Activated CD8-positive, alpha-beta T cell treated with anti-CD3 and anti-CD28 coated beads, Interleukin-2, amount 10 ng/mL, durations not matched to agents 7 days and 5 days (primary cell): ENCODE measurements at regions of chr17 and their contacts with region 1.

Region 1: DNA sequence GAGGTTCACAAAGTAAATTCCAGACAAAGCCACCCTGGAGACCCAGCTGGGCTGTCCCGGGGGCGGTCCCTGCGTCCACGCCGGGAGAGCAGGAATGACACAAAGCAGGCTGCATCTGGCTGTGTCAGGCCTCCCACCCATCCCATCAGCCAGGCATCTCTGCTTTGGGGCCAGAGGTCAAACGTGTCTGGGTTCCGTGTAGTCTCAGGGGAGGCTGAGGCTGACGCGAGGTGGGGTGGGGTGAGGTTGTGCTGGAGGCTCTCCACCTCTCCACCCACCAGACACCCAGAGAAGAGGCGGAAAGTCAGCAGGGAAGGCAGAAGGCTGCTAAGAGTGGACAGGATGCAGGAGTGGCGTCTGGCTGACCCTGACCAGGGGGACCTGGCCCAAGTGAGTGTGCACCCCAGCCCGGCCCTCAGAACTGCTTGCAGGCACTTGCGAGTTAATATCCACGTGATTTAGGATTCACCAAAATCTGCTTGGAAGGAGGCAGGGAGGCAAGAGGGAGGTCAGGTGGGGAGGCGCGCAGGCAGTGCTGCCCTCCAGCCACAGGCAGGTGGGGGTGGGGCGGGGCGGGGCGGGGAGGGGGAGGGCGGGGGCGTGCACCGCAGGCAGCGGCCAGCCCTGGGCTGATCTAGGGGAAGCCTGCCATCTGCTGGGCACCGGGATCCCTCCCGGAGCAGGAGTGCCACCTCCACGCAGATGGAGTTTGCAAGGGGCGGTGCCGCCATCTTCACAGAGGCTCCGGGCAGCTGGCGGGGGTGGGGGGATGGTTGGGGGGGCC is 44.3 kb downstream of the TBC1D16 start:
- DNase-seq: peak; percentile 89
- ATAC-seq: peak; percentile 91
- H3K4me3 Mint-ChIP-seq: peak overlapping the region; percentile 70
- H3K27ac Mint-ChIP-seq: peak overlapping the region; percentile 43
- H3K4me1 Mint-ChIP-seq: peaks cover 44% of the 10 kb centered on the region
- H3K27me3 Mint-ChIP-seq: no peaks in the 10 kb centered on the region

Region 2: DNA sequence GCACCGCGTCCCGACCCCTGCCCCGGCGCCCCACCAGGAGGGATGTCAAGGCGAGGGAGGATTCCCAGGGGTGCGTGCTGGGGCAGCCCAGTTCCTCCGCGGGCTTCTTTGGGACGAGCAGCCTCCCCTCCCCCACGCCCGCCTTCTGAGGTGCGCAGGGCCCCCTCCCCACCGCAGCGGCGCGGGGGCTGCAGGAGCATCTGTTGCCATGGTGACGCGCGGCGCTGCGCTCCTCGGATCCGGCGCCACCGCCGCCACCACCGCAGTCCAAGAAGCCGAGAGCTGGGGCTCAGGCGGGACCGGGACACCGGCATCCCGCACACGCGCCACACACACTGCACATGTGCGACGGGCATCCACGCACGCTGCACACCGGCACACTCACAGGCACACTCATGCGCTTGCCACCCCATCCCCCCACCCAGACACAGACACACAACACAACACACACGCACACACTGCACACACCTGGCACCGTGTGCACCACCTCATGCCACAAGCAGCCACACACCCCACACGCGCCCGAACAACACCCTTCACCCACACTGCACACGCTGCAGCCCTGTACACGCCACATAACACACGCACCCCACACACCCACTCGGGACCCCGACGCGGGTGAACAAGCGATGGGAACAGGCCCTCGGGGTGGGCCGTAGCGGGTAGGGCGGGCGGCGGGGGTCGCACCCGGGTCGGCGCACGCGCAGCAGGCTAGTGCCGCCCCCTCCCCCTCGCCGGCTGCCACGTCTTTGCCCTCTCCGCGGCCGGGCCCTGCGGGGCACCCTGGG is 243.6 kb before region 1 on chr17:
- CTCF ChIA-PET with region 1: interaction called, 11 read pairs
- POLR2A ChIA-PET with region 1: no interaction called
- DNase-seq: no peak
- ATAC-seq: no peak
- H3K4me3 Mint-ChIP-seq: peak overlapping the region; percentile 38
- H3K27ac Mint-ChIP-seq: no peak overlapping the region
- H3K4me1 Mint-ChIP-seq: peaks cover 21% of the 10 kb centered on the region
- H3K27me3 Mint-ChIP-seq: peaks cover 38% of the 10 kb centered on the region

Region 3: DNA sequence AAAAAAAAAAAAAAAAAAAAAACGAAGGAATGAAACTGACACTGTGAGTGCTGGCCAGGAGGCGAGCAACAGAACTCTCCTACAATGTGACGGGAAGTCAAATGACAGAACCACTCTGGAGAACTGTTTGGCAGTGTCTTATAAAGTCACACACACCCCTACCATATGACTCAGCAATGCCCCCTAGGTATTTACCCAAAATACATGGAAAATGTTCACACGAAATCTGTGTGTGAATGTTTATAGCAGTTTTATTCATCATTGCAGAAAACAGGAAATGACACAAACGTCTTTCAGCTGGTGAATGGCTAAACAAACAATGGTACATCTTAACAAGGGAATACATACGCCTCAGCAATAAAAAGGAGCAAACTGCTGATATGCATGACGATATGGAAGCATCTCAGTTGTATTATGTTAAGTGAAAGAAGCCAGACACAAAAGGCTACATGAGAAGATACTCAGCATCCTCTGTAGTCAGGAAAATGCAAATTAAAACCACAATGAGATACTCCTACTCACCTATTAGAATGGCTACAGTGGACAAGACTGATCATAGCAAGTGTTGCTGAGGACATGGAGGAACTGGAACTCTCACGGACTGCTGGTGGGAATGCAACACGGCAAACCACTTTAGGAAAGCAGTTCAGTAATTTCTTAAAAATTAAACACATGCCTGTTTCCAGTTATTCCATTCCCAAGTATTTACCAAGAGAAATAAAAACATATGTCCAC is 30.4 kb before region 1 on chr17:
- CTCF ChIA-PET with region 1: no interaction called
- POLR2A ChIA-PET with region 1: no interaction called
- DNase-seq: no peak
- ATAC-seq: no peak
- H3K4me3 Mint-ChIP-seq: no peak overlapping the region
- H3K27ac Mint-ChIP-seq: no peak overlapping the region
- H3K4me1 Mint-ChIP-seq: peaks cover 4% of the 10 kb centered on the region
- H3K27me3 Mint-ChIP-seq: peaks cover 9% of the 10 kb centered on the region

Region 4: DNA sequence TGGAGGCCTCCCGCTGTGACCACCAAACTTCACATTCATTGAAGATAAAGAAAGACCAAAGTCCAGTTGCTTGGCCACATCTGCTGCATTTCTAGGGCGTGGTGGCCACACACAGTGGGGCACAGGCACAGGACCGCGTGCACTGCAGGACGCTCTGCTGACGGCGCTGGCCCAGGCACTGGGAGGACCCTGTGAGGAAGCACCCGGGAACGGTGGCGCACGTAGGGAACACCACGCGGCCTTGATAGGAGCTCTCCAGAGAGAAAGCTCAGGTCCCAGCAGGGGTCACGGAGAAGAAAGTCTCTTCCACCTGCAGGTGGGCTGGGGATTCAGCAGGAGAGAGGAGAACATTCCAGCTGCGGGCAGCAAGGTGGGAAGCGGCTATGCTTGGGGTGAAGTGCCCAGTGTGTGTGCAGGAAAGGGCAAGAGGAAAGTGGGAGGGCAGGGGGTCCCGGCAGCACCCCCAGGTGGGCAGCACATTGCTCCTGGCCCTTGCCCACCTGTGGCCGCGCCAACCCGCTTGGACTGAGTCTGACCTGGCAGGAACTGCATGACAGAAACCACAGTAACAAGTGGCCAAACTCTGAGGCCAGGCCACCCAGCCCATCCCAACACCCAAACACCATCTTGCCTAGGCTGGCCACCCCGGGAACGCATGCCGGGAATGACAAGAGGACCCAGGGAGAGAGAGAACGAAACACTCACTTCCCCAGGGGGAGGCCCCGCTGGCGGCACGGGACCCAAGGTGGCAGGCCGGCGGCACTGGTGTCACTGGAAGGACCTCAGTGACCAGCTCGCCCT is 11.6 kb after region 1 on chr17:
- CTCF ChIA-PET with region 1: interaction called, 52 read pairs
- POLR2A ChIA-PET with region 1: no interaction called
- DNase-seq: no peak
- ATAC-seq: no peak
- H3K4me3 Mint-ChIP-seq: no peak overlapping the region
- H3K27ac Mint-ChIP-seq: no peak overlapping the region
- H3K4me1 Mint-ChIP-seq: peaks cover 13% of the 10 kb centered on the region
- H3K27me3 Mint-ChIP-seq: no peaks in the 10 kb centered on the region